H1 (cell line): ENCODE measurements at regions of chr12 and their contacts with region 1.

Region 1: DNA sequence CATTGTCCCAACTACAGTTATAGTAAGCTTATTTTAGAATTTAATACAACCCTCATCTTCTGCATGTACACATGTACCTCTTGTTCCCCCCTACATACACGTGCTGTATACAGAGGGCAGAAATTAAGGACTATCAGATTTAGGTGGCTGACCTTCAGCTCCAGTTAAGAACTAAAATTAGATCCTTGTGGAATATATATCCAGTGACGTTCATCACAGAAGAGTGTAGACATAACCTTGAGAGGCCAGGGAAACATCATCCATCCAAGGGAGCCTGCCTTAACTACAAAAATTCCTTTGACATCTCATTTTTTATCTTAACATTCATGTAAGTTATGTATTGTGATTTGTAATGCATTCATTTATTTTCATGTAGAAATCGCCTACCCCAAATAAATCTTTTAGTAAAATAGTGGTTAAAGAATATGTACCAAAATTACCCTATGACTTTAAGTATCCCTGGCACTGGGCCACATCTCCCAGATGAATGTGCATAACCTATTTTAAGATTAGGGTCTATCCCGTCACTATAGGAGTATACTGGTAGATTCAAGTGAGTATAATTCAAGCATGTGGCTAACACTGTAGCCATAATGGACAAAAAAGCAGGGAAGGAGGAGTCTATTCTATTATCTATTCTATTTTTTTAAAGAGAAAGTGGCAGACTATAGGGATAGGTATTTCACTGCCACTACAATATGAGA is 27.5 kb downstream of the RIC8B start:
- DNase-seq: no peak
- H3K4me3 ChIP-seq: no peak overlapping the region
- H3K27ac ChIP-seq: no peak overlapping the region
- H3K4me1 ChIP-seq: no peaks in the 10 kb centered on the region
- H3K27me3 ChIP-seq: no peaks in the 10 kb centered on the region
- CTCF ChIP-seq: no peak
- EP300 ChIP-seq: no peak
- POLR2A ChIP-seq: no peak
- RAD21 ChIP-seq: no peak

Region 2: DNA sequence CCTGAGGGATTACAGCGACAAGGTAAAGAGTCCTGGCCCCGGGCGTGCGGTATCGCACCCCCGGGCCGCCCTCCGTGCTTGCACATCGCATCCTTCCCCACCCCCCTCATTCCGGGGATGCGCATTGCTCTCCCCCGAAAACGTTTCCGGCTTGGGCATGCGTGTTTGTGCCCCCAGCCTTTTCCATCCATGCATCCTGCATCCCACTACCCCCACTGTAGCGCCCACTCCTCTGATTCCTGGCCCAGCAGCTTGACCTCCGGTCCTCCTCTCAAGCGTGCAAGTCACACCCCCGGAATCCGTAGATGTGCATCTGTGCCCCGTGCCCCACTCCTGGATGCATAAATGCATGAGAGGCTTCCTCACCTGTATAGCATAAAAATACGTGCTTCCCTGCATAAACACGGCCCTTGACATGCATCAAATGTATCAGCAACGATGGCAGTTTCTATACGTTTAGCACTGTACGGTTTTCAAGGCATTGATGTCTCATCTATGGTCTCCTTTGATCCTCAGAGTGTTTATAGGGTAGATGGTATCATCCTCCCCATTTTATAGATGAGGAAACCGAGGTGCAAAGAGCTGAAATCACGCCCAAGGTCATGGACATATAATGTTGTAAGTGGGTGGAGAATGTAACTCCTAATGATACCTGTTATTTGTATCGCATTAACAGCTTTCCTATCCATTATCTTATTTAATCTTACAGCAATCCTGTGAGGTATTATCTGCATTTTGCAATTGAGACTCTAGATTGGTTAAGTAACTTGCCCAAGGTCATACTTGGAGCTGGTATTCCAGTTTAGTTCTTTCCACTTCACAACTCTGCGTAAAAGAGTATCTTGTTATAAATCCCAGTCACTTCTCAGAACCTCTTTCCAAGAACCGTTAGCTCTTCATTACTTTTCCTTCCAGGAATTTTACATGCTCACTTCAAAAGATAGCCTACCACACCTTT is 26.9 kb before region 1 on chr12:
- CTCF ChIA-PET with region 1: interaction called, 13 read pairs
- POLR2A ChIA-PET with region 1: interaction called, 6 read pairs
- DNase-seq: no peak
- H3K4me3 ChIP-seq: peak overlapping the region; percentile 77 to 92 (median 85)
- H3K27ac ChIP-seq: peak overlapping the region; percentile 92; the same call in 1 of the 2 replicates
- H3K4me1 ChIP-seq: peaks cover 0 to 10% (median 5%) of the 10 kb centered on the region in 4 experiments; a peak in 3 of 7 replicates
- H3K27me3 ChIP-seq: no peaks in the 10 kb centered on the region
- CTCF ChIP-seq: no peak
- EP300 ChIP-seq: no peak
- POLR2A ChIP-seq: no peak; a peak in 1 of 3 replicates
- RAD21 ChIP-seq: no peak

Region 3: DNA sequence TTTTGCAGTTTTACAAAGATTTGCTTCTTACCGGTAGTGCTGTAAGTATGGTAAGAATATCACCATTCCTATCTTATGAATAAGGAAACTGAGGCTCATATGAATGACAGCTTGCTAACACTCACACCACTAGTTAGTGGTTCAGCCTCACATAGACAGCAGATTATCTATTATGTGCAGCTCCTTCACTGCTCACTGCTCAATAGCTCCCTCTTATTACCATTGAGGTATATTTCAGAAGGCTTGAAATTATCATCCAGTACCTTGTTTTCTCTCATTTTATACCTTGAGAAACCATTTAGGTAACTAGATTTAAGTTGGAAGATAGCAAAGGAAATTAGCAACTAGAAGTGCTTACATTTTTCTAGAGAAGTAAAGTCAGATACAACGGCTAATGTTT is 12.0 kb before region 1 on chr12:
- CTCF ChIA-PET with region 1: interaction called, 13 read pairs
- POLR2A ChIA-PET with region 1: interaction called, 3 read pairs
- DNase-seq: no peak
- H3K4me3 ChIP-seq: no peak overlapping the region
- H3K27ac ChIP-seq: no peak overlapping the region
- H3K4me1 ChIP-seq: no peaks in the 10 kb centered on the region
- H3K27me3 ChIP-seq: no peaks in the 10 kb centered on the region
- CTCF ChIP-seq: no peak
- EP300 ChIP-seq: no peak
- POLR2A ChIP-seq: no peak
- RAD21 ChIP-seq: peak; percentile 17 to 28; a peak in 1 of 4 replicates

Region 4: DNA sequence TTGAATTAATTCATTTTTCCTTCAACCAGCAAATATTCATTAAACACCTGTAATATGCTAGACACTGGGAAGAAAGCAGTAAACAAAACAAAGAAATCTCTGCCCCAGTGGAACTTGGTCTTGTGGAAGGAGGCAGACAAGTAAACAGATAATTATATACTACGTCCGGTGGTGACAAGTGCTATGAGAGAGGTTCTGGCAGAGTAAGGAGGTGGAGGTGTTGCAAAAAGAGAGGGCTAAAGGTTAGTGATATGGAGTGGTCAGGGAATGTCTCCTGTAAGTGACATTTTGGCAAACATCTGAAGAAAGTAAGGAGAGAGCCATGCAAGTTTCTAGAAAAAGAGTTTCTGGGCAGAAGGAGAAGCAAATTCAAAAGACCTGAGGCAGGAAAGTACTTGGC is 45.9 kb after region 1 on chr12:
- CTCF ChIA-PET with region 1: no interaction called
- POLR2A ChIA-PET with region 1: no interaction called
- DNase-seq: no peak
- H3K4me3 ChIP-seq: no peak overlapping the region
- H3K27ac ChIP-seq: no peak overlapping the region
- H3K4me1 ChIP-seq: no peaks in the 10 kb centered on the region
- H3K27me3 ChIP-seq: no peaks in the 10 kb centered on the region
- CTCF ChIP-seq: no peak
- EP300 ChIP-seq: no peak
- POLR2A ChIP-seq: no peak
- RAD21 ChIP-seq: no peak